ENCODE measurements at regions of chr5 and their contacts with region 1.

Region 1: DNA sequence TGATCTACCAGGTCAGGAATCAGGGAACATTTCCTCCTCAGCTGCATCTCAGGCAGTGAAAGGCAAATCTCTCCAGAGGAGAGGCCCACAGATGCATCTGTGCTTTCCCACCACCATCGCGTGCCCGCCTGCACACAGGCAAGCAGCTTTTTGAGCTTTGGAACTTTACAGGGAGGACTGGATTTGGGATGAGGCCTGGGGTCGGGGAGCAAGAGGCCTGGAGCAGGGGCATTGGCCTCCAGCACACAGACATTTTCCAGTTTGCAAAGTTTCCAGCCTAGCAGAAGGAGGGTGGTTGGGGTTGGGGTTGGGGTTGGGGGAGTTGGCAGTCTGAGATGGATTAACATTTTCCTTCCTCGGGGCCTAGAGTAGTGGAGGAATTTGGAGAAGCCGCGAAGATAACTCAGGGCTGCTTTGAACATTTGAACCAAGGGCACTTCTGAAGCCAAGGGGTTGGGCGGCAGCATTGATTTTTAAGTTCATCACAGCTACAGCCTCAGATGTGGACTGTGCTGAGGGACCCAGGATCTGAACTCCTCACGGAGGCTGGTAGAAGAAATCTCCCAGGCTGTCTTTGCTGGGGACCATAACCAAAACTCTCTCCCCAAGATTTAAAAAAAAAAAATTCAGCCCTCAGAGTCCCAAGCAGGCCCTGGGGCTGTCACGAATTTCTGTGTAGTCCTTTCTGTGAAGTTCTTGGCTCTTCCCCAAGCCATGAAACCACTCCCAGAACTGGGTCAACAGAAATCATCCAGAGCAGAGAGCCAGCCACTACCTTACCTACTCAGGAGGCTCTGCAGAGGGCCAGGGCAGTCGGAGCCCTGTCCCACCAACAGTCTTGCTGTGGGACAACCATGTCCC is 25.6 kb downstream of the C5orf15 start:
- DNase-seq: peak in 1 of 2 donors; percentile 48
- H3K4me3 ChIP-seq: no peak overlapping the region
- H3K27ac ChIP-seq: no peak overlapping the region
- H3K4me1 ChIP-seq: peaks cover 0 to 8% of the 10 kb centered on the region in 2 donors
- H3K27me3 ChIP-seq: no peaks in the 10 kb centered on the region
- CTCF ChIP-seq: no peak
- POLR2A ChIP-seq: no peak

Region 2: GRCh38 chr5:133884569-133885311 is 58.1 kb before region 1 on chr5:
- intact Hi-C with region 1: no loop called
- DNase-seq: no peak
- H3K4me3 ChIP-seq: no peak overlapping the region
- H3K27ac ChIP-seq: no peak overlapping the region
- H3K4me1 ChIP-seq: no peaks in the 10 kb centered on the region
- H3K27me3 ChIP-seq: no peaks in the 10 kb centered on the region
- CTCF ChIP-seq: no peak
- POLR2A ChIP-seq: no peak

Region 3: GRCh38 chr5:133916914-133917313 is 25.9 kb before region 1 on chr5:
- intact Hi-C with region 1: loop called (anchors 2 kb)
- DNase-seq: no peak
- H3K4me3 ChIP-seq: no peak overlapping the region
- H3K27ac ChIP-seq: no peak overlapping the region
- H3K4me1 ChIP-seq: no peaks in the 10 kb centered on the region
- H3K27me3 ChIP-seq: no peaks in the 10 kb centered on the region
- CTCF ChIP-seq: no peak
- POLR2A ChIP-seq: no peak

Measured in breast epithelium (tissue), 4 donors.